Activated CD8-positive, alpha-beta T cell treated with anti-CD3 and anti-CD28 coated beads for 36 hours (primary cell): ENCODE measurements at regions of chr6 and their contacts with region 1.

Region 1: DNA sequence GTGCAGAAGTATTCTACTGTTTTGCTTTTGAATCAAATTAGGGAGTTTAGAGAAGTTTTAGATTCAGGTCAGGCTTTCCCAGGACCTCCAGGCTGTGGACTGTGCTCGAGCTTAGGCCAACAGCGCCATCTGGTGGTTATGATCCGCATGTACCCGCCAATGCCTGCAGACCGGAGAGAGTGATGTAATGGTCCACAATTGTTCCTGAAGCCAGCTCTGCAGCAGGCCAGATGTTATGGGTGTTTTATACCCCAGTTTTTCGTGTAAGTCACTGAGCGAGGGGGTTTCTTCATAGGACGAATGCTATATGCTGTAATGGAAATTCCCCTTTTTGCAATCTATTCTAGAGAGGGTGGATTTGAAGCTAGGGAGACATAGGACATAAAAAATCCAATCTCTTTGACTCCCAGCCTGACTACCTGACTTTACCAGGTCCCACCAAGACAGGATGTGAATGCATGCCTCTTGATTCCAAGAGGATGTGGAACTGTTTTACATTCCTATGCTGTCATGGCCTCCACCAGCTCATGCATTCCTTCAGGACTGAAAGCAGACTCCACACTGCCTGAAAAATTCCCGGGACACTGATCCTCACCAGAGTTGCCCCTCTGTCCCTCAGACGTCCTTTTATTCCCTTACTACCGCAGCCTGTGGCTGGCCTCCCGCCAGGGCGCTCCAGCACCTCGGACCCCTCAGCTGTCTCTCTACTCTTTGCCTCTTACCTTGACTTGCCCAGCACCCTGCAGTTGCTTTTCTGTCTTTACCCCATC is 41.2 kb upstream of the LY86 start:
- DNase-seq: peak; percentile 86
- ATAC-seq: peak; percentile 95
- H3K4me3 Mint-ChIP-seq: peak overlapping the region; percentile 64
- H3K27ac Mint-ChIP-seq: no peak overlapping the region
- H3K4me1 Mint-ChIP-seq: no peaks in the 10 kb centered on the region
- H3K27me3 Mint-ChIP-seq: peaks cover 31% of the 10 kb centered on the region
- CTCF ChIP-seq: peak; percentile 96

Region 2: GRCh38 chr6:5471044-5471443 is 1076.3 kb before region 1 on chr6:
- CTCF ChIA-PET with region 1: interaction called, 3 read pairs
- POLR2A ChIA-PET with region 1: no interaction called
- intact Hi-C with region 1: loop called (anchors 10 kb)
- DNase-seq: peak; percentile 84
- ATAC-seq: peak; percentile 84
- H3K4me3 Mint-ChIP-seq: no peak overlapping the region
- H3K27ac Mint-ChIP-seq: no peak overlapping the region
- H3K4me1 Mint-ChIP-seq: peaks cover 3% of the 10 kb centered on the region
- H3K27me3 Mint-ChIP-seq: no peaks in the 10 kb centered on the region
- CTCF ChIP-seq: peak; percentile 85

Region 3: DNA sequence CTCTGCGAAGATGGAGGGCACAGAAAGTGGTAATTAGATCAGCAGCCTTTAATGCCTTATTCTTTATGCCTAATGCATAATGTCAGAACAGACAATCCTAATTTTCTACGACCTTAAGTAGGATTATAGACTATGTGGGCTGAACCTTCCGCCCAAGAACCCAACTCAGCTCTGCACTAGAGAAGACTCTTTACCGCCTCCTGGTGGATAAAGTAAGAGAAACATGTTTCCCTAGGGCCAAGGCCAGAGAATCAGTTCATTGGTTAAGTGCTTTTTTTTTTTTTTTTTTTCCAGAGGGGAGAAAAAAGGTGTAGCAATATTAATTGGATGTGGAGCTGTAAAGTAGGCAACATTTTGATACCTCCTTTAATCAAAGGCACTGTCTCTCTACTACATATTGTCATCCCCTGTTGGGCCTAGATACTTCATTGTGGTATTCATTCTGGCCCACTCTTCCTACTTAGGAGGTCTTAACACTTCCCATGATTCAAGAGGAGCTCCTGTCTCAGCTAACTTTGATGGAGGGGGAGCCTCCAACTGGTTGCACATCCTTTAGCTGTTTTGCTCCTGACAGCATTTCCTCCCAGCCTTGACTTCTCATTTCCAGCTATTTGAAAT is 415.7 kb before region 1 on chr6:
- CTCF ChIA-PET with region 1: interaction called, 12 read pairs
- POLR2A ChIA-PET with region 1: no interaction called
- intact Hi-C with region 1: no loop called
- DNase-seq: peak; percentile 9
- ATAC-seq: no peak
- H3K4me3 Mint-ChIP-seq: no peak overlapping the region
- H3K27ac Mint-ChIP-seq: no peak overlapping the region
- H3K4me1 Mint-ChIP-seq: no peaks in the 10 kb centered on the region
- H3K27me3 Mint-ChIP-seq: peaks cover 3% of the 10 kb centered on the region
- CTCF ChIP-seq: peak; percentile 60

Region 4: GRCh38 chr6:6357032-6357431 is 190.3 kb before region 1 on chr6:
- CTCF ChIA-PET with region 1: no interaction called
- POLR2A ChIA-PET with region 1: no interaction called
- intact Hi-C with region 1: no loop called
- DNase-seq: no peak
- ATAC-seq: no peak
- H3K4me3 Mint-ChIP-seq: no peak overlapping the region
- H3K27ac Mint-ChIP-seq: no peak overlapping the region
- H3K4me1 Mint-ChIP-seq: no peaks in the 10 kb centered on the region
- H3K27me3 Mint-ChIP-seq: peaks cover 6% of the 10 kb centered on the region
- CTCF ChIP-seq: no peak

Region 5: DNA sequence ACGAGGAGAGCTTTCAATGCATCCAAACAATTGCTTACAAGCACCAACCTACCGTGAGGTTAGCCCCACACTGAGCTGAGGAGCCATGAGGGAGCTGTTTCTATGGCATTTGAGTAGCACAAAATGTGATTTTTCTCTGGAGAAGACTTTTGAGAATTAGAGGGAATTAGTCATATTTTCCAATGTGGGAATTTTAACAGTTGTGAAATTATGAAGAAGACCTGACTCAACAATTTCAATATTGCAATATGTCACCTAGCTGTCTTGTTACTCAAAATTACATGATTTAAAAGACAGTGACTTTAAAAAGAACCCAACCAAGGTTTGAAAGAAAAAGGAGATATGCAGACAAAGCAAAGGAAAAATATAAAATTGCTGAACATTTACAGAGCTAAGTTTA is 21.4 kb before region 1 on chr6:
- CTCF ChIA-PET with region 1: interaction called, 10 read pairs
- POLR2A ChIA-PET with region 1: no interaction called
- intact Hi-C with region 1: no loop called
- DNase-seq: no peak
- ATAC-seq: no peak
- H3K4me3 Mint-ChIP-seq: no peak overlapping the region
- H3K27ac Mint-ChIP-seq: no peak overlapping the region
- H3K4me1 Mint-ChIP-seq: peaks cover 2% of the 10 kb centered on the region
- H3K27me3 Mint-ChIP-seq: peaks cover 54% of the 10 kb centered on the region
- CTCF ChIP-seq: no peak

Region 6: GRCh38 chr6:6575143-6575542 is 27.8 kb after region 1 on chr6:
- CTCF ChIA-PET with region 1: interaction called, 12 read pairs
- POLR2A ChIA-PET with region 1: no interaction called
- intact Hi-C with region 1: no loop called
- DNase-seq: no peak
- ATAC-seq: no peak
- H3K4me3 Mint-ChIP-seq: no peak overlapping the region
- H3K27ac Mint-ChIP-seq: no peak overlapping the region
- H3K4me1 Mint-ChIP-seq: peaks cover 3% of the 10 kb centered on the region
- H3K27me3 Mint-ChIP-seq: no peaks in the 10 kb centered on the region
- CTCF ChIP-seq: no peak